Psoas muscle (tissue), 8 donors: ENCODE measurements at regions of chr3 and their contacts with region 1.

Region 1: DNA sequence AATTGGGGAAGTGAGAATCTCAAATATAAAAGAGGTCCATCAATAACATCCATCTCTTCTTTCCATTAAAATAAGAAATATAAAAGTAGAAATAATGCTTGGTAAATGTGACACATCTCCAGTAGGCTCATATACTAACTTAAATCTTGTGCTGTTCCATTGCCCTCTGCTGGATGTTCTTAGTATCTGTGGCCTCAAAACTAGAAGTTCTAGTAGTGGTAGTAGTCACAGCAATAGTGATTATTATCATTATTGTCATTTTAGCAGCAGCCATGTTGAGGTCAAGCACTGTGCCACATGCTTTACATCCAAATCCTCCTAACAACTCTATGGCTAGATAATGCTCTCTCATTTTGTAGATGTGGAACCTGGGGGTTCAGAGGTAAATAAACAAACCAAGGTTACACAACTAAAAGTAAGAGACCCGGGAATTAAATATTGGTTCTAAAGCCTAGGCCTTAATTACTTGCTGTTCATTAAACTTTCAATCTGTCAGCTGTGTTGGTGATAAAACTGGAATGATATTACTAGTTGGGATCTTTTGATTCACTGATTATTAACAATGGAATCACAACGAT is 20.2 kb upstream of the BTLA start:
- DNase-seq: no peak
- ATAC-seq: peak in 1 of 4 donors; percentile 68
- H3K4me3 ChIP-seq: no peak overlapping the region
- H3K27ac ChIP-seq: no peak overlapping the region
- H3K4me1 ChIP-seq: no peaks in the 10 kb centered on the region
- H3K27me3 ChIP-seq: no peaks in the 10 kb centered on the region
- CTCF ChIP-seq: peak; percentile 57

Region 2: GRCh38 chr3:112293368-112294321 is 225.9 kb before region 1 on chr3 and contains the start of gene SLC9C1:
- intact Hi-C with region 1: loop called in 1 of 2 experiments (anchors 5 kb)
- DNase-seq: no peak
- ATAC-seq: peak in 3 of 4 donors; percentile 59 to 67 (median 62)
- H3K4me3 ChIP-seq: peak within 1 kb of the TSS; percentile 55
- H3K27ac ChIP-seq: no peak within 1 kb of the TSS
- H3K4me1 ChIP-seq: no peaks in the 10 kb centered on the region
- H3K27me3 ChIP-seq: no peaks in the 10 kb centered on the region
- CTCF ChIP-seq: peak; percentile 49
- total RNA-seq, gene SLC9C1: 0.10 to 0.32 (median 0.19) TPM

Region 3: DNA sequence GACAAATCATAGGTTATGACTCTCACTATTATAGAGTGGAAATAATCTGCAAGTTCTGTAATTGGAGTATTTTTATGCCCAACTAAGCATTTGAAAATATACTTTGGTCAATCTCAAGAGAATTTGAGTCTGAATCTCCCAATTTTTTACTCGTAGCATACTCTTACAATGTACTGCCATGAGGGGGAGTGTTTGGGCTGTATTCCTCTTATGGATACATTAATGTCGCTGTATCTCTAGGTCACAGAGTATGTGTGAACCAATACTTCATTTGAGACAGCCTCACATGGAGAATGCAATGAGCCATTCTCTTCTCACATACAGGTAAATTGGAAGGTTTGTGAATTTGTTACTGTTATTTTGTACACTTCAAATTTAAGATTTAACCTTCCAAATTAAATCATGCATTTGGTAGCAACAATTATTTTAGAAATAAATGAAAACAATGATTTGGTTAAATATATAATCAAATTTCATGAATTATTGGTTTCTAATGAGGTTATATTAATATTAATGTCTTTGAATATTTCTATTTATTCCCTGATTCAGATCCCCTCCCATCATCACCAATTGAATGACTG is 192.1 kb before region 1 on chr3:
- intact Hi-C with region 1: loop called in 1 of 2 experiments (anchors 10 kb)
- DNase-seq: no peak
- ATAC-seq: peak in 3 of 4 donors; percentile 49 to 54 (median 52)
- H3K4me3 ChIP-seq: no peak overlapping the region
- H3K27ac ChIP-seq: no peak overlapping the region
- H3K4me1 ChIP-seq: no peaks in the 10 kb centered on the region
- H3K27me3 ChIP-seq: no peaks in the 10 kb centered on the region
- CTCF ChIP-seq: peak; percentile 43